ENCODE measurements at regions of chr17 and their contacts with region 1.

Region 1: DNA sequence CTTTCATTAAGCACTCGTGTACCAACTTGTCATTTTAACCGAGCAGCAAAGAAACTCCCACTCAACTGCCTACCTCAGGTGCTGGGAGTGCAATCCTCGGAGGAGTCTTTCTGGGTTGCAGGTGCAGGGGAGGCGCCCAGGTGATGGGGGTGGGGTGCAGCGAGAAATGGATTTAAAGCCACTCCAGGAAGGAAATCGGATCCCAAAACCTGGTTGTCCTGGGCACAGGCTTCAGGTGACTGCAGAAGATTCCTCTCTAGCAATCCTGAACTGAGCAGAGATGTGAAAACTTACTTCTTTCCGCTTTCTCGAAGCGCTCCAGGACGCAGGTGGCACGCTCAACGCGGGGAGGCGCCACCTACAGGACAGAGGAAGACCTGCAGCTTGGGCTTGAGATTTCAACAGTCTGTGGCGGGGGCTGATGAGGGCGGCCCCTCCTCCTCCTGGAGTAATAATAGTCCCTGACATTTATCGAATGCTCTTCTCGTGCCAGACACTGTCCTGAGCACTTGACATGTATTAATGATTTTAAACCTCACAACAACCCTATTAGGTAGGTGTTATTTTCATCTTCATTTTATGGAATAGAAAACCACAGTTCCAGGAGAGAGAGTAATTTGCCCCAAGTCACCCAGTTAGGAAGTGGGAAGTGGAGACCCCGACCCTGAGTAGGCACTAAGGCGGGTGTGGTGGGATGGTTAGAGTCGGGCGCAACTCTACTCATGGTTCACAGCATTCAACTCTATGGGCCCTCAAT is 27.2 kb upstream of the SKAP1 start:
- DNase-seq: no peak
- ATAC-seq: peak; percentile 93
- H3K4me3 ChIP-seq: peak overlapping the region; percentile 2; the same call in 1 of the 2 replicates
- H3K27ac ChIP-seq: no peak overlapping the region
- H3K4me1 ChIP-seq: peaks cover 34% of the 10 kb centered on the region
- H3K27me3 ChIP-seq: no peaks in the 10 kb centered on the region
- CTCF ChIP-seq: peak; percentile 96; a peak in 5 of 6 replicates
- EP300 ChIP-seq: no peak
- POLR2A ChIP-seq: no peak
- RAD21 ChIP-seq: peak; percentile 96

Region 2: DNA sequence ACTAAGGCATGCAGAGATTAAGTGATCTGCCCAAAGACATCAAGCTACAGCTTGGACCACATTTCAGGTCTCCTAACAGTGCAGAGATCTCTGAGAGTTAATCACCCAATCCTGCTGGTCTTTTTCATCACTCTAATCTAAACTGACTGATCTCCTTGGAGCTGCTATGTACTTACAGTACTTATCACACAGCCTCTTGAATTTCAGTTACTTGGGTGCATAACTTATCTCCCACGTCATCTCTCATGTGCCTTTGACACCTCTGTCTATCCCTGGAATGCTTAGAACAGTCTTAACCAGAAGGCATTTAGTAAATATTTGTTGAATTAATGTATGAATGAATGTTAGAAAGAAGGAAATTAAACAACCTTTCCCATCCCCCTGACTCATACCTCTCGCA is 210.6 kb before region 1 on chr17:
- CTCF ChIA-PET with region 1: no interaction called
- POLR2A ChIA-PET with region 1: no interaction called
- RAD21 ChIA-PET with region 1: no interaction called
- SMC1A ChIA-PET with region 1: no interaction called
- in situ Hi-C with region 1: no loop called
- intact Hi-C with region 1: no loop called
- DNase-seq: no peak
- ATAC-seq: no peak
- H3K4me3 ChIP-seq: no peak overlapping the region
- H3K27ac ChIP-seq: no peak overlapping the region
- H3K4me1 ChIP-seq: peaks cover 25% of the 10 kb centered on the region
- H3K27me3 ChIP-seq: no peaks in the 10 kb centered on the region
- CTCF ChIP-seq: no peak
- EP300 ChIP-seq: no peak
- POLR2A ChIP-seq: no peak
- RAD21 ChIP-seq: no peak

Region 3: DNA sequence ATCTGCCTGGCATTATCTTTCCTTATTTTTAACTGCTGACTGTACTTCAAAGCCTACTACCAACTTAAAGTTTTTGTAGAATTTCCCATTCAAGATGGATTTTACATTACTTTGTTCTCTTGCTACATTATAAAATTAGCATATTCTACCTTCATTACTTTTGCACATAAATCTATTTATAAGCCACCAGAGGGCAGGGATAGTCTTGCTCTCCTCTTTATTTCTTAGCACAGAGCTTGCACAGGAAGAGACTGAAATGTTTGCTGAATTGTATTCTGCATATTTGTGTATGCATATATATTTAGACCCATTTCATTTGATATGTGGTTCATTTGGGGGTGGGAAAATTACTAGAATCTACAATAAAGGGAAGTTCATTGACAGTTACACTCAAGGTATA is 135.2 kb before region 1 on chr17:
- CTCF ChIA-PET with region 1: no interaction called
- POLR2A ChIA-PET with region 1: no interaction called
- RAD21 ChIA-PET with region 1: no interaction called
- SMC1A ChIA-PET with region 1: no interaction called
- in situ Hi-C with region 1: no loop called
- intact Hi-C with region 1: no loop called
- DNase-seq: no peak
- ATAC-seq: no peak
- H3K4me3 ChIP-seq: no peak overlapping the region
- H3K27ac ChIP-seq: no peak overlapping the region
- H3K4me1 ChIP-seq: no peaks in the 10 kb centered on the region
- H3K27me3 ChIP-seq: no peaks in the 10 kb centered on the region
- CTCF ChIP-seq: peak in 1 of 3 experiments; percentile 5; a peak in 1 of 6 replicates
- EP300 ChIP-seq: no peak
- POLR2A ChIP-seq: no peak
- RAD21 ChIP-seq: no peak

Region 4: GRCh38 chr17:48357779-48358602 is 99.3 kb before region 1 on chr17:
- CTCF ChIA-PET with region 1: interaction called, 89 read pairs
- POLR2A ChIA-PET with region 1: no interaction called
- RAD21 ChIA-PET with region 1: interaction called, 47 read pairs
- SMC1A ChIA-PET with region 1: interaction called, 59 read pairs
- in situ Hi-C with region 1: no loop called
- intact Hi-C with region 1: no loop called
- DNase-seq: no peak
- ATAC-seq: no peak; the same call in 2 of the 3 replicates
- H3K4me3 ChIP-seq: no peak overlapping the region
- H3K27ac ChIP-seq: no peak overlapping the region
- H3K4me1 ChIP-seq: no peaks in the 10 kb centered on the region
- H3K27me3 ChIP-seq: no peaks in the 10 kb centered on the region
- CTCF ChIP-seq: no peak
- EP300 ChIP-seq: no peak
- POLR2A ChIP-seq: no peak
- RAD21 ChIP-seq: no peak

Region 5: DNA sequence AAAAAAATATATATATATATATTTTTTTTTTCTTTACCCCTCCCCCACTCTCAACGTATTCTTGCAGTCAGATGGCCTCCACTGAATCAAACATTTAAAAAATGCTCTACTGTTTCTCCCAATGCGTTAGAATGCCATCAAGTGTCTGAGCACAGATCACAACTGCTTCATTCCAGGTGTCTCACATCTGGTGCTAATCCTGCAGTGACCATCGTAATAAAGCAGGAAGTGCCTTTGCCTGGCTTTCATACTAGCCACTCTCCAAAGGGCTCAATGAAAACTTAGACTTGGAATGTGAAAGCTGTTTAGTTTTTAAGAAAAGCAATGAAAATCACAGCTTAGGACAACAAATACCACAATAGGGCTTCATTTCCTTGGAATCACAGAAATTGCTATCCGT is 64.4 kb before region 1 on chr17:
- CTCF ChIA-PET with region 1: interaction called, 6 read pairs
- POLR2A ChIA-PET with region 1: no interaction called
- RAD21 ChIA-PET with region 1: interaction called, 9 read pairs
- SMC1A ChIA-PET with region 1: interaction called, 10 read pairs
- in situ Hi-C with region 1: no loop called
- intact Hi-C with region 1: no loop called
- DNase-seq: no peak
- ATAC-seq: no peak
- H3K4me3 ChIP-seq: no peak overlapping the region
- H3K27ac ChIP-seq: no peak overlapping the region
- H3K4me1 ChIP-seq: peaks cover 3% of the 10 kb centered on the region; the same call in 1 of the 2 replicates
- H3K27me3 ChIP-seq: no peaks in the 10 kb centered on the region
- CTCF ChIP-seq: no peak
- EP300 ChIP-seq: no peak
- POLR2A ChIP-seq: no peak
- RAD21 ChIP-seq: no peak

Region 6: DNA sequence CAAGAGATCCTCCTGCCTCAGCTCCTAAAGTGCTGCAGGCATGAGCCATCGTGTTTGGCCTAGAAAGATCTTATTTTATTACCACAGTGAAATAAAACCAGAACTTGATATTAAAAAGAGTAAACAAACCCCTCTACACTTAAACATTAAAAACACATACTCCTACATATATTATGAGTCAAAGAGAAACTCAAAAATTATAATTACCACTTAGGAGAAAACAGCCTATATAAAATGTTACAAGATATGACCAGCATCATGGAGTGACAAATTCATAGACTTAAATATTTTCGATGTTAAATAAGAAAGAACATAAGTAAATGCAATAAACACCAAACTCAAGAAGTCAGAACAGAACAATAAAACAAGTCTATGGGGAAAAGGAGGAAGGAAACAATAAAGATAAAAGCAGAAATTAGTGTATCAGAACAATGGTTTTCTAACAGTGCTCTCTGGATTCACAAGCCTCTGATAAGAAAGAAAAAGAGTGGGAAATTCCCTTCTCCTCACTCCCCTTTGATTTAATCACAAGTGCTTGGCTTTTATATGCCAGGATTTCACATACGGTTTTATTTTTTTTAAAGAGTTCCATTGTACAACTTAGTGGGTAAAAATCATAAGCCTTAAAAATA is 50.2 kb before region 1 on chr17:
- CTCF ChIA-PET with region 1: interaction called, 20 read pairs
- POLR2A ChIA-PET with region 1: no interaction called
- RAD21 ChIA-PET with region 1: interaction called, 6 read pairs
- SMC1A ChIA-PET with region 1: interaction called, 12 read pairs
- in situ Hi-C with region 1: no loop called
- intact Hi-C with region 1: loop called (anchors 2 kb)
- DNase-seq: no peak
- ATAC-seq: no peak; the same call in 2 of the 3 replicates
- H3K4me3 ChIP-seq: no peak overlapping the region
- H3K27ac ChIP-seq: 0 out of 2 replicates have a peak overlapping the region, but pooled peaks have one; percentile 43
- H3K4me1 ChIP-seq: peaks cover 5% of the 10 kb centered on the region; the same call in 1 of the 2 replicates
- H3K27me3 ChIP-seq: no peaks in the 10 kb centered on the region
- CTCF ChIP-seq: no peak
- EP300 ChIP-seq: no peak
- POLR2A ChIP-seq: no peak
- RAD21 ChIP-seq: no peak

Region 7: DNA sequence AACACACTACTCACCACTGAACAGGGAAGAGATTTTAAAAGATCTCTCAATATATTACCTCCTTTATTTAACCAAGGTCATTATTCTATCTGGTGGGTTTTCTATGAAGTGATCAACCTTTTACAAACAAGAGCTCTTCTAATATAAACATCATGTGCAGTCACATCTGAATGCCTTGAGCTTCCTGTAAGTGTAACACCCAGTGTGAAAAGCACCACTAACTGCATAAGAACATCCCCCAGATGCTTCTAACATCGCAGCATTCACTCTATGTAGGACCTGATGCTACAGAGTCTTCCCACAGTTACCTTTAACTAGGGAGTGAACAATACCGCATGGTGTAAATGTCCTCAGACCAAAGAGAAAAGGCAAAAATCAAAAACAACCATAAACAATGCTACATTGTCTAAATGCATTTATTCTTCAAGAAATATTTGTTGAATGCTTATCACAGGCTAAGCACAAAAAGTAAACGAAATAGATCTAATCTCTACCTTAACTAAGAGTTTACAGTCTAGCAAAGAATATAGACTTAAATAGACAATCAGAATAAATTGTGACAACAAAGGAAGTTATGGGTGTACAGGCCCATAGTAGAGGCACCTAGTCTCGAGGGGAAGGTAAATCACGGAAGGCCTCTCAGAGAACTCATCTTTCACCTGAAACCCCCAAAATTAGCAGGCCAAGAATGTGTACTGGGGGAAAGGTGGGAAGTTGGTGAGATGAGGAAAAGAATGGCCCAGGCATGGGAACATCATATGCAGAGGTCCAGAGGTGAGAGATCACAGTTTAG is 43.4 kb before region 1 on chr17:
- CTCF ChIA-PET with region 1: interaction called, 20 read pairs
- POLR2A ChIA-PET with region 1: interaction called, 6 read pairs
- RAD21 ChIA-PET with region 1: interaction called, 6 read pairs
- SMC1A ChIA-PET with region 1: interaction called, 12 read pairs
- in situ Hi-C with region 1: no loop called
- intact Hi-C with region 1: no loop called
- DNase-seq: no peak
- ATAC-seq: peak; percentile 73
- H3K4me3 ChIP-seq: no peak overlapping the region
- H3K27ac ChIP-seq: peak overlapping the region; percentile 33; the same call in 1 of the 2 replicates
- H3K4me1 ChIP-seq: peaks cover 14% of the 10 kb centered on the region
- H3K27me3 ChIP-seq: no peaks in the 10 kb centered on the region
- CTCF ChIP-seq: no peak; a peak in 1 of 6 replicates
- EP300 ChIP-seq: no peak
- POLR2A ChIP-seq: no peak
- RAD21 ChIP-seq: no peak

Region 8: DNA sequence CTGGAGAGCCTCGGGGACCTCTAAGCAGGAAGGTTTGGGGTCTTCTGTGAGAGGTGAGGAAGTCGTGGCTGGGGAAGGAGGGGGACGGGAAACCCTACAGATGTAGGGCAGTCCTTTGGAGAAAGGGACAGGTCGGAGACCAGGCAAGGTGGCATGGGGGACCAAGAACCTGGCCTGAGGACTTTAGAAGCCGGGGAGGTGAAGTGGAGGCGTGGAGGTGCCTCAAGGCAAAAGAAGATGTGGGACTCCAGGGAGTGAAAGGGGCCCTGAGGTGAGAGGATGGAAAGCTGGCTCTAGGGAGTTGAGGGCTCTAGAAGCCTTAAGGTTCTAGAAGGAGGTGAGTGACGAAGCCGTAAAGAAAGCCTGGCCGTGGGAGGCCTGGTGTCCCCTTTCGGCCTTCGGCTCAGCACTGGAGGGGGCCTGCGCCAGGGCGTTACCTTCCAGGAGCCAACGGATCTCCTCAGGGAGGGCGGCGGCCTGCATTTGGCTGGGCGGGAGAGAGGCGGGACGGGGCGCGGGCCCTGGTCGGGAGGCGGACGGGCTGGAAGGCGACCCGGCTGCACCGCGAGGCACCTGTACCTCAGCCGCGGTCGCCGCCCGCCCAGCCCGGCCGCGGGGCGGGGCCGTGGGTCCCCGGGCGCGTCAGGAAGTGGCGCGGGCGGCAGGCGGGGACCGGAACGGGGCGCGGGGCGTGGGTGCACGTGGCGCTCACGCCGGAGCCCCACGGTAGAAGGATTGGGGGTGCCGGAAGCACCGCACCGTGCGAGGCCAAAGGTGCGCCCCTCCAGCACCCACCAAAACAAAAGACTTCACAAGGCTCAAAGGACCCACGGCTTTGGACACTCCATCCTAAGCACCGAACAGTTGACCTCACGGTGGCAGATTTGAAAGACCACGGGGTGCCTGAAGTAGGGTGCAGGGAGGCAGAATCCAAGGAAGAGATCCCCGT is 27.3 kb before region 1 on chr17 and contains the start of gene SKAP1:
- CTCF ChIA-PET with region 1: interaction called, 6 read pairs
- POLR2A ChIA-PET with region 1: interaction called, 6 read pairs
- RAD21 ChIA-PET with region 1: interaction called, 8 read pairs
- SMC1A ChIA-PET with region 1: interaction called, 10 read pairs
- in situ Hi-C with region 1: no loop called
- intact Hi-C with region 1: loop called (anchors 1 kb)
- DNase-seq: no peak
- ATAC-seq: peak; percentile 84
- H3K4me3 ChIP-seq: peak within 1 kb of the TSS; percentile 94
- H3K27ac ChIP-seq: peak within 1 kb of the TSS; percentile 74
- H3K4me1 ChIP-seq: peaks cover 8% of the 10 kb centered on the region
- H3K27me3 ChIP-seq: no peaks in the 10 kb centered on the region
- CTCF ChIP-seq: no peak
- EP300 ChIP-seq: no peak
- POLR2A ChIP-seq: peak; percentile 92
- RAD21 ChIP-seq: no peak
- polyA plus RNA-seq, gene SKAP1: 17.1 to 34.2 TPM

Region 9: DNA sequence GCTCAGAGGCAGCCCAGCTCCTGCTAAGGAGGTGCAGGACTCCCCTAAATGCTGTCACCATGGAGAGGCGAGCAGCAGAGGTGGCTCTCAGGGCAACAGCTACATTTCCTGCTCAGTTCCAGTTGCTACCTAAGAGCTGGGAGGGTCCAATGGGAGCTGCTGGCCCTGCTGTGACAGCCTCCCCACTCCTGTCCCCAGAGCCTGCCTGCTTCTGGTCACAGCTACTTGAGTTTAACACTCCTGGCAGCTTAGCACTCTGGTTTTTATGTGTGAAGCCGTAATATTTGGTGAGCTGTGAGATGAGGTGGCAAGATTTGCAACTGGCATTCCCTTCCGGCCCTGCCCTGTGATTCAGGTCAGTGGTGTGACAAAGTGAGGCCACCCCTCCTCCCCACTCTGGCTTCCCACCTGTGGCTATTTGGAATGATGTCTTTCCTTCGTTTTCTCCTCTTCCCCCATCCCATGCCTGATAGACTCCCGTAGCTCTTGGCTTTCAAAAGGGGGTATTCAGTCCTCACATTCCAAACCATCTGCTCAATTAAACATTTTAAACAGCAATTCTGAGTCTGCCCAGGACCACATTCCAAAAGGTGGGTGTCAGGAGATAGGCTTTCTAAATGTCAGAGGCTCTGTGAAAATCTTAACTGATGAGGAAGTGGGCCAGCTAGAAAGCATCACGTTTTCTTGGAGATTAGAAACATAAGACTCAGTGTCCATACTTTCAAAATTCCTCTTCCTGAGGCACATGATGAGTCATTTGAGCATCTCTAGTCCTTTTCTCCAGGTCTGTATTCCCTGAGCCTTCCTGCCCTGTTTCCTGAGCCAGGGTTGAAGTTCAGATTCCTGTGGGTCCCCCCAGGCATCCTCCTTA is 15.4 kb after region 1 on chr17:
- CTCF ChIA-PET with region 1: interaction called, 29 read pairs
- POLR2A ChIA-PET with region 1: interaction called, 5 read pairs
- RAD21 ChIA-PET with region 1: interaction called, 10 read pairs
- SMC1A ChIA-PET with region 1: interaction called, 20 read pairs
- in situ Hi-C with region 1: no loop called
- intact Hi-C with region 1: no loop called
- DNase-seq: no peak
- ATAC-seq: peak; percentile 95
- H3K4me3 ChIP-seq: 0 out of 2 replicates have a peak overlapping the region, but pooled peaks have one; percentile 17
- H3K27ac ChIP-seq: no peak overlapping the region
- H3K4me1 ChIP-seq: peaks cover 16% of the 10 kb centered on the region
- H3K27me3 ChIP-seq: no peaks in the 10 kb centered on the region
- CTCF ChIP-seq: no peak
- EP300 ChIP-seq: peak; percentile 36 to 55; a peak in 1 of 4 replicates
- POLR2A ChIP-seq: no peak
- RAD21 ChIP-seq: no peak